Activated naive CD4-positive, alpha-beta T cell treated with anti-CD3 and anti-CD28 coated beads for 36 hours (primary cell): ENCODE measurements at regions of chr6 and their contacts with region 1.

Region 1: GRCh38 chr6:26473758-26474438 is 16.1 kb downstream of the BTN2A1 start:
- DNase-seq: peak; percentile 90
- H3K4me3 Mint-ChIP-seq: peak overlapping the region; percentile 98
- H3K27ac Mint-ChIP-seq: peak overlapping the region; percentile 100
- H3K4me1 Mint-ChIP-seq: peaks cover 40% of the 10 kb centered on the region
- H3K27me3 Mint-ChIP-seq: no peaks in the 10 kb centered on the region

Region 2: GRCh38 chr6:26249957-26250697 is 223.8 kb before region 1 on chr6:
- CTCF ChIA-PET with region 1: no interaction called
- intact Hi-C with region 1: loop called (anchors 1 kb)
- DNase-seq: peak; percentile 82
- H3K4me3 Mint-ChIP-seq: peak overlapping the region; percentile 86
- H3K27ac Mint-ChIP-seq: peak overlapping the region; percentile 100
- H3K4me1 Mint-ChIP-seq: peaks cover 17% of the 10 kb centered on the region
- H3K27me3 Mint-ChIP-seq: no peaks in the 10 kb centered on the region

Region 3: DNA sequence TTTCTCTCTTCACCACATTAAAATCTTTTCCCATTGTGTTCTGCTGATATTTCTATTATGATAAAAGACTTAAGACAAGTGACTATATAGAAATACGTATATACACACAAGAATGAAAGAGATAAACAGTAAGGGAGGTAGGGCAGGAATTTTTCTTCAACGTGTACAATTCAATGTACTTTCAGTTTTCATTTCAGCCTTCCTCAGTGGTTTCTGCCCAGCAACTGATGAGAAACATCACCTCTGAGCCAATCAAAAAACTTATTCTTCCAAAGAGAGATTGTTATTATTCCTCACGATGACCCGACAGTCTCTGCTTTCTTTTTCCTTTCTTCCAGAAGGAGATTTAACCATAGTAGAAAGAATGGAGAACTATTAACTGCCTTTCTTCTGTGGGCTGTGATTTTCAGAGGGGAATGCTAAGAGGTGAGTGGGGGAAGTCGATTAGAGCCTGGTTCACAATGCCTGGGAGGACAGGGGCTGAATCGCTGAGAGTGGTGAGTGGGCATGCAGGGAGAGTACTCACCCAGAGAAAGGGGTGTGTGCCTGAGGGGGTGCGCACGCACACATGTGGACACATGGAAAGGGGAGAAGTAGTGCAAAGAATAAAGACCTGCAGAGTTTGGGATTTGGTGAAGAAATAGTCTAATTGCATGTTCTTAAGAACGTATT is 71.8 kb before region 1 on chr6 and contains the start of gene BTN3A1:
- CTCF ChIA-PET with region 1: no interaction called
- intact Hi-C with region 1: loop called (anchors 2 kb)
- DNase-seq: peak; percentile 71
- H3K4me3 Mint-ChIP-seq: peak within 1 kb of the TSS; percentile 92
- H3K27ac Mint-ChIP-seq: peak within 1 kb of the TSS; percentile 97
- H3K4me1 Mint-ChIP-seq: peaks cover 47% of the 10 kb centered on the region
- H3K27me3 Mint-ChIP-seq: no peaks in the 10 kb centered on the region
- total RNA-seq, gene BTN3A1: 37.6 to 40.0 TPM

Region 4: DNA sequence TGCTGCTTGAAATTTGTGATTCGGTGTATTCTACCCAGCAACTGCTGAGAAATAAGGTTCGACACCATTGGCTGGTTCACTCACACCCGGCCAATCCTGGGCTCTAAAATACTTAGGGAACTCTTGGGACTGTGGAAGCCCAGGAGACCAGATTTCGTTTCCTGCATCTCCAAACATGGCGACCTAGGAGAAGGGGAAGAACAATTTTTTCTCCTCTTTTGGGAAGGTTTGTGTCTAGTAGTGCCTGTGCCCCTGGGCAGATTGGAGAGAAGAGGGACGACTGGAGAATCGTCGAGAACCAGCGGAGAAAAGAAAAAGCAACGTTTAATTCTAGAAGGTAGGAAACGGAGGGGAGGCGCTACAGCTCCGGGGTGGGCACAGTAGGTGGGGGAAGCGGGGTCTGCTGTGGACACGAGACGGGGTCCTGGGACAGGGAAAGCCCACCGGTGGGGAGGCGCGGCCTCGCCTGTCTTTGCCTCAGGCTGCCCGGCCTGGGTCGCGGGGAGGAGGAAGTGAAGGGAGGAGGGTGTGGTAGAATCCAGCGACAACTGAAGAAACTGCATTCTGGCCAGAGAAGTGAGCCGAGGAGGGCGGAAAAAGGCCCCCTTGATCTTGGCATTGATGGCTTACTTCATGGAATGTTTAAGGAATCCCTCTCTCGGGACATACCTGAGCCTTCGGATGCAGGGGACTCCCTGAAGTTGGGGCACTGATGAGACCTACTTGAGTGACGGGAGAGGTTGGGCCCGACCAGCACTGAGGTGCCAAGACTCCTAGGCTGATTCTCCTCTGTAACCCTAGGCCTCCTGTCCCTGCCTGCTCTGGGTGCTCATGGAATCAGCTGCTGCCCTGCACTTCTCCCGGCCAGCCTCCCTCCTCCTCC is 15.9 kb before region 1 on chr6 and contains the start of gene BTN2A1:
- CTCF ChIA-PET with region 1: no interaction called
- intact Hi-C with region 1: loop called (anchors 1 kb)
- DNase-seq: peak; percentile 84
- H3K4me3 Mint-ChIP-seq: peak within 1 kb of the TSS; percentile 96
- H3K27ac Mint-ChIP-seq: peak within 1 kb of the TSS; percentile 96
- H3K4me1 Mint-ChIP-seq: peaks cover 48% of the 10 kb centered on the region
- H3K27me3 Mint-ChIP-seq: no peaks in the 10 kb centered on the region
- total RNA-seq, gene BTN2A1: 16.0 TPM

Region 5: DNA sequence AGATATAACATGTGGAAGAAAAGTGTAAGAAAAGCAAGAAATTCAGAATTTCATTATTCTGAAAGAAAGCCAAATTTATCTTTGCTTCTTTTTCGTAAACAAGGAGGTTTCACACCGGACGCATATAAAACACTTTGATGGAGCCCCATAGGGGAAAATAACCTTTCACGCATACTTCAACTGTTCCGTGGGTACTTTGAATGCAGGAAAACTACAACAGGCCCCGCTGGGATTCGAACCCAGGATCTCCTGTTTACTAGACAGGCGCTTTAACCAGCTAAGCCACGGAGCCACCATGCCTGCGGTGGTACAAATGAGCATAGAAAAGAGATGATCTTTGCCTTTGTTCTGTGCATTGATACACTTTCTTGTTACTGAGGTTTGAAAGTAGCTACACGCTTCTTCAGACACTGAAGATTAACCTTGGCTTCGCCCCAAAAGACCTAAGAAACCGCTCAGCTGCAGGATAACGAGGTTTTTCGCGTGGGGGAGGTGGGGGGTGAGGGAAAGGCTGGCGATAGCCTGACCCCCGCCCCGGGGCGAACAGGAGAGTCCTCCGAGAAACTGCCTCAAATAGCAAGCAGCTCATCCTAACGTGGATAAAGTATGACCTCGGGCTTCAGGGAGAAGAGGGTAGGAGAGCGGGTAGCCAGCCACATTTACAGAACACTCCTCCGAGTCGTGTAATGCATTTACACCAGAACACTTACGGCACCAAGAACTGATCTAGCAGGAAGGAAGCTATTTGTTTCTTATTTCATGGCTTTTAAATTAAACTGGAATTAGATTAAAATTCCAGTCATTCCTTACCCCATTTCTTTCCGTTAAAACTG is 59.0 kb after region 1 on chr6:
- CTCF ChIA-PET with region 1: interaction called, 3 read pairs
- intact Hi-C with region 1: loop called (anchors 1 kb)
- DNase-seq: peak; percentile 97
- H3K4me3 Mint-ChIP-seq: peak overlapping the region; percentile 95
- H3K27ac Mint-ChIP-seq: peak overlapping the region; percentile 89
- H3K4me1 Mint-ChIP-seq: peaks cover 40% of the 10 kb centered on the region
- H3K27me3 Mint-ChIP-seq: no peaks in the 10 kb centered on the region